ENCODE measurements at regions of chr10 and their contacts with region 1.

Region 1: DNA sequence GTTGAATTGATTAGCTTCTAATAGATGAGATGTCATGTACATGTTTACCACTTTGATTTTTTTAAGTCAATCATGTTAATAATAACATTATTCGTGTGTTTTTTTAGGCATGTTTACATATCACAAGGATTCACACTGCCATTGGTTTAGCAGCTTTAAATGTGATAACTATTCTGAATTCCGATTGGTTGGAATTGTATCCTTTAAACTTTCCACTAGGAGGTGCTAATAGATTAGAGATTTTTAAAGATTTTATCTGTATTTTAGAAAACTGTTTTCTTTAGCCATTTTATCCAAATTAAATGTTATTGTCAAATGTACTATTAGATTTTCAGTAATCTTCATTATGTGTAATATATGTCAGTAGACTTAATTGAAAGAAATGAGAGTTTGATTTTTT is 83.2 kb downstream of the HECTD2 start:
- DNase-seq: no peak
- H3K4me3 ChIP-seq: no peak overlapping the region
- H3K4me3 Mint-ChIP-seq: no peak overlapping the region
- H3K27ac Mint-ChIP-seq: no peak overlapping the region
- H3K4me1 ChIP-seq: no peaks in the 10 kb centered on the region
- H3K4me1 Mint-ChIP-seq: no peaks in the 10 kb centered on the region
- H3K27me3 ChIP-seq: no peaks in the 10 kb centered on the region
- H3K27me3 Mint-ChIP-seq: peaks cover 2% of the 10 kb centered on the region
- CTCF ChIP-seq: peak in 1 of 2 experiments; percentile 35

Region 2: DNA sequence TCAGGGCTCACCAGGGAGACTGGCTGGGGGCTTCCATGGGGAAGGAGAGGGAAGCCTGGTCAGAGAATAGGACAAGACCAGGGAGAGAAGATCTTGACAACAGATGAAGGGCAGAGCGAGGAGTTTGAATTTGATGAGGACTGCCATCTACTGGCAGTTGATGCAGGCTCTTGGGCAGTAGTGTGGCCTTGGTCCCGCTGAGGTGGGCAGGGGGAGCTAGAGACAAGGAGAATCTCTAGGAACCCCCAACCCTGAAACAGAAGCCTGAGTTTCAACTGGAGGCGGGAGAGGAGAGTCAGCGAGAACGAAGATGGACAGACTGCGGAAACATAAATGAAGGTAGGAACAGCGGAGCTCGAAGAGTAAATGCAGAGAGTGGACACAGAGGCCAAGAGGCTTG is 58.5 kb after region 1 on chr10:
- CTCF ChIA-PET with region 1: no interaction called
- POLR2A ChIA-PET with region 1: no interaction called
- intact Hi-C with region 1: loop called (anchors 1 kb)
- DNase-seq: peak in 1 of 2 experiments; percentile 44
- H3K4me3 ChIP-seq: no peak overlapping the region
- H3K4me3 Mint-ChIP-seq: no peak overlapping the region
- H3K27ac Mint-ChIP-seq: no peak overlapping the region
- H3K4me1 ChIP-seq: peaks cover 7% of the 10 kb centered on the region
- H3K4me1 Mint-ChIP-seq: peaks cover 13% of the 10 kb centered on the region
- H3K27me3 ChIP-seq: no peaks in the 10 kb centered on the region
- H3K27me3 Mint-ChIP-seq: peaks cover 3% of the 10 kb centered on the region
- CTCF ChIP-seq: peak in 1 of 2 experiments; percentile 77

Region 3: GRCh38 chr10:91635401-91636400 is 142.4 kb after region 1 on chr10:
- CTCF ChIA-PET with region 1: interaction called, 43 read pairs
- POLR2A ChIA-PET with region 1: no interaction called
- intact Hi-C with region 1: loop called (anchors 1 kb)
- DNase-seq: peak; percentile 55 to 74
- H3K4me3 ChIP-seq: no peak overlapping the region
- H3K4me3 Mint-ChIP-seq: no peak overlapping the region
- H3K27ac Mint-ChIP-seq: no peak overlapping the region
- H3K4me1 ChIP-seq: no peaks in the 10 kb centered on the region
- H3K4me1 Mint-ChIP-seq: no peaks in the 10 kb centered on the region
- H3K27me3 ChIP-seq: no peaks in the 10 kb centered on the region
- H3K27me3 Mint-ChIP-seq: peaks cover 2% of the 10 kb centered on the region
- CTCF ChIP-seq: peak; percentile 76 to 79

Region 4: DNA sequence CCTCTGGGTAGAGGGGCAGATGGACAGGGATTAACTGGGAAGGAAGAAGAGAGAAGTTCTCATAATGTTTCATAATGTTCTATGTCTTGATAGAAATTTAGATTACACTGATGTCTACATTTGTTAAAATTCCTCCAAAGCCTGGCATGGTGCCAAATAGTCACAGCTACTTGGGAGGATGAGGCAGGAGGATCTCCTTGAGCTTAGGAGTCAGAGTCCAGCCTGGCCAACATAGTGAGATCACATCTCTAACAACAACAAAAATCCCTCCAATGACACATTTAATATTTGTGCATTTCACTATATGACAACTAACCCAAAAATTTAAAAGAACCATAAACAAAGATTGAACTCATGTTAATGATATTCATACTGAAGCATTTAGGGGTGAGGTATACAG is 172.5 kb after region 1 on chr10:
- CTCF ChIA-PET with region 1: no interaction called
- POLR2A ChIA-PET with region 1: no interaction called
- intact Hi-C with region 1: no loop called
- DNase-seq: no peak
- H3K4me3 ChIP-seq: no peak overlapping the region
- H3K4me3 Mint-ChIP-seq: no peak overlapping the region
- H3K27ac Mint-ChIP-seq: no peak overlapping the region
- H3K4me1 ChIP-seq: no peaks in the 10 kb centered on the region
- H3K4me1 Mint-ChIP-seq: no peaks in the 10 kb centered on the region
- H3K27me3 ChIP-seq: no peaks in the 10 kb centered on the region
- H3K27me3 Mint-ChIP-seq: peaks cover 9% of the 10 kb centered on the region
- CTCF ChIP-seq: no peak

Region 5: DNA sequence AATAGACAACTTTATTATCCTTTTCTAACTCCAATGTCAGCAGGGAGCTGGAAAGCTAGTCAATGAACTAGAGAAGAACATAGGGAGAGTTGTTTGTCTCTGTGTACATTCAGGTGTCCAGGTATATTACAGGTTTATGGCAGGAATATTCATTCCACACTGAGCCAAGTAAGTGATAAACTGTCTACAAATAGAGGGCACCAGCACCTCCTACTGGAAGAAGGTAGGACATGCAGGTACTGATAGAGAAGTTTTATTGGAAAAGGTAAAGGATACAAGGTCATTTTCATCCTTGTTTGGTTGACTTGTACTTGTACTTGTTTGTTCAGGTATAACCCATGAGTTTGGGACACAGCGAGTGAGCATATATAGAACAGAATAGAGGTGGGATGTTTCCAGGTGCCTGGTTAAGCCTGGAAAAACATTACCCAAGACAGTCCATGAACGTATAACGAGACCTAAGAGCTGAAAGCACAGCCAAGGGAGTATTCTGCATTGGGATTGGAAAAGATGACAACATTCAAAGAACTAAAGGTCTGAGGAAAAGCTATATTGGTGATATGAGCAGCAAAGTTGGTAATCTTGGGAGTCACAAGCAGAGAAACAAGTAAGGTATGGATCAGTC is 201.0 kb after region 1 on chr10:
- CTCF ChIA-PET with region 1: no interaction called
- POLR2A ChIA-PET with region 1: no interaction called
- intact Hi-C with region 1: loop called (anchors 1 kb)
- DNase-seq: peak in 1 of 2 experiments; percentile 28
- H3K4me3 ChIP-seq: no peak overlapping the region
- H3K4me3 Mint-ChIP-seq: no peak overlapping the region
- H3K27ac Mint-ChIP-seq: no peak overlapping the region
- H3K4me1 ChIP-seq: no peaks in the 10 kb centered on the region
- H3K4me1 Mint-ChIP-seq: no peaks in the 10 kb centered on the region
- H3K27me3 ChIP-seq: no peaks in the 10 kb centered on the region
- H3K27me3 Mint-ChIP-seq: peaks cover 3% of the 10 kb centered on the region
- CTCF ChIP-seq: peak; percentile 52 to 56

Region 6: DNA sequence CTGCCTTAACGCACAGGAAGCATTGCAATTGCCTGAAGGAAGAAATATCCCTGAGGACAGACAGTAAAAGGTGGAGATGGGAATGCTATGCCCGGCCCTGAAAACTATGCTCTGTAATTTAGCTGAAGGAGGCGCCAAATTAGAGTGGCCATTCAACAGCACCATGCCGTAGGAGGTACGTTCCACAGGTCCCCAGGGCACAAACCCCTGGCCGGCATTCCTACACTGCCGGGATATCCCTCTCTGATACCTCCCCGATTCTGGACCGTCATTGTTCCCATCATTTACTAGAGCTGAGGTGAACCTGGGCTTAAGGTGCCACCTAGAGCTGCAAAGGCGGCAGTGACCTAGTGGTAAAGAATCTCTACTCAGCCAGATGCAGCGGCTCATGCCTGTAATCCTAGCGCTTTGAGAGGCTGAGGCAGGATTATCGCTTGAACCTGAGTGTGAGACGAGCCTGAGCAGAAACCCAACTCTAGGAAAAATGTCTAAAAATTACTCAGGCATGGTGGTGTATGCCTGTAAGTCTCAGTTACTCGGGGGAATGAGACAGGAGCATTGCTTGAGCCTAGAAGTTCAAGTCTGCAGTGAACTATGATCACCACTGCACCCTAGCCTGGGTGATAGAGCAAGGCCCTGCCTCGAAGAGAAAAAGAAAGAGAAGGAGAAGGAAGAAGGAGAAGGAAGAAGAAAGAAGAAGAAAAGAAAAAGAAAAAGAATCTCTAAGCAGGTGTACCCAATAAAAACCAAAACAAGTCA is 251.9 kb after region 1 on chr10:
- CTCF ChIA-PET with region 1: interaction called, 5 read pairs
- POLR2A ChIA-PET with region 1: no interaction called
- intact Hi-C with region 1: loop called (anchors 1 kb)
- DNase-seq: peak; percentile 42 to 55
- H3K4me3 ChIP-seq: no peak overlapping the region
- H3K4me3 Mint-ChIP-seq: no peak overlapping the region
- H3K27ac Mint-ChIP-seq: no peak overlapping the region
- H3K4me1 ChIP-seq: peaks cover 7% of the 10 kb centered on the region; the same call in 1 of the 2 replicates
- H3K4me1 Mint-ChIP-seq: peaks cover 5% of the 10 kb centered on the region
- H3K27me3 ChIP-seq: no peaks in the 10 kb centered on the region
- H3K27me3 Mint-ChIP-seq: peaks cover 9% of the 10 kb centered on the region
- CTCF ChIP-seq: peak; percentile 29 to 54

Region 7: DNA sequence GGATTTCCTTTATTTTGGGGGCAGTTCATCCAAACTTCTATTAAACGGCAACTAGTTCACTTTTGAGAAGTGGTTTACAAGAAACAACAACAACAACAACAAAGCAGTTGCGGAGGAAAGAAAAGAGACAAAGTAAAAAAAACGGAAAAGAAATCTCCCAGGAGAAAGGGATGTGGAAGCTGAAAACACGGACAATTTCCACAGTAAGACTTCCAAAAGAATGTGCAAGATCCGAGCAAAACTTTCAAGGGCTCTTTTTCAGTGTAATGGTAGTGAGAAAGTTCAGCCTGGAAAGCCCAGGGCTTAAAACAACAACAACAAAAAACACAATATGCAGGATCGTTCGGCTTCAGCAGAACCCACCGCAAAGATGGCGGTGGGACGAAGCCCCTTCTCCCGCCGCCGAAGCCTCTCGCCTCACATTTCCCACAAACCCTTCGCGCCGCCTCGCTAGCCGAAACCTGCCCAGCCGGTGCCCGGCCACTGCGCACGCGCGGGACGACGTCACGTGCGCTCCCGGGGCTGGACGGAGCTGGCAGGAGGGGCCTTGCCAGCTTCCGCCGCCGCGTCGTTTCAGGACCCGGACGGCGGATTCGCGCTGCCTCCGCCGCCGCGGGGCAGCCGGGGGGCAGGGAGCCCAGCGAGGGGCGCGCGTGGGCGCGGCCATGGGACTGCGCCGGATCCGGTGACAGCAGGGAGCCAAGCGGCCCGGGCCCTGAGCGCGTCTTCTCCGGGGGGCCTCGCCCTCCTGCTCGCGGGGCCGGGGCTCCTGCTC is 304.7 kb after region 1 on chr10 and contains the start of gene TNKS2:
- CTCF ChIA-PET with region 1: no interaction called
- POLR2A ChIA-PET with region 1: no interaction called
- intact Hi-C with region 1: loop called (anchors 5 kb)
- DNase-seq: peak; percentile 95 to 98
- H3K4me3 ChIP-seq: peak within 1 kb of the TSS; percentile 98
- H3K4me3 Mint-ChIP-seq: peak within 1 kb of the TSS; percentile 96
- H3K27ac Mint-ChIP-seq: peak within 1 kb of the TSS; percentile 97
- H3K4me1 ChIP-seq: peaks cover 24% of the 10 kb centered on the region
- H3K4me1 Mint-ChIP-seq: peaks cover 37% of the 10 kb centered on the region
- H3K27me3 ChIP-seq: no peaks in the 10 kb centered on the region
- H3K27me3 Mint-ChIP-seq: no peaks in the 10 kb centered on the region
- CTCF ChIP-seq: no peak
- total RNA-seq, gene TNKS2: 46.7 and 48.5 TPM in 2 replicates

Region 8: GRCh38 chr10:91908337-91909116 is 415.2 kb after region 1 on chr10:
- CTCF ChIA-PET with region 1: no interaction called
- POLR2A ChIA-PET with region 1: no interaction called
- intact Hi-C with region 1: loop called (anchors 5 kb)
- DNase-seq: peak; percentile 90 to 91
- H3K4me3 ChIP-seq: peak overlapping the region; percentile 91
- H3K4me3 Mint-ChIP-seq: peak overlapping the region; percentile 85
- H3K27ac Mint-ChIP-seq: peak overlapping the region; percentile 82
- H3K4me1 ChIP-seq: peaks cover 5% of the 10 kb centered on the region; the same call in 1 of the 2 replicates
- H3K4me1 Mint-ChIP-seq: peaks cover 12% of the 10 kb centered on the region
- H3K27me3 ChIP-seq: no peaks in the 10 kb centered on the region
- H3K27me3 Mint-ChIP-seq: peaks cover 2% of the 10 kb centered on the region
- CTCF ChIP-seq: peak in 1 of 2 experiments; percentile 82